Activated CD8-positive, alpha-beta T cell treated with anti-CD3 and anti-CD28 coated beads, Interleukin-2, amount 10 ng/mL, durations not matched to agents 7 days and 5 days (primary cell): ENCODE measurements at regions of chr3 and their contacts with region 1.

Region 1: DNA sequence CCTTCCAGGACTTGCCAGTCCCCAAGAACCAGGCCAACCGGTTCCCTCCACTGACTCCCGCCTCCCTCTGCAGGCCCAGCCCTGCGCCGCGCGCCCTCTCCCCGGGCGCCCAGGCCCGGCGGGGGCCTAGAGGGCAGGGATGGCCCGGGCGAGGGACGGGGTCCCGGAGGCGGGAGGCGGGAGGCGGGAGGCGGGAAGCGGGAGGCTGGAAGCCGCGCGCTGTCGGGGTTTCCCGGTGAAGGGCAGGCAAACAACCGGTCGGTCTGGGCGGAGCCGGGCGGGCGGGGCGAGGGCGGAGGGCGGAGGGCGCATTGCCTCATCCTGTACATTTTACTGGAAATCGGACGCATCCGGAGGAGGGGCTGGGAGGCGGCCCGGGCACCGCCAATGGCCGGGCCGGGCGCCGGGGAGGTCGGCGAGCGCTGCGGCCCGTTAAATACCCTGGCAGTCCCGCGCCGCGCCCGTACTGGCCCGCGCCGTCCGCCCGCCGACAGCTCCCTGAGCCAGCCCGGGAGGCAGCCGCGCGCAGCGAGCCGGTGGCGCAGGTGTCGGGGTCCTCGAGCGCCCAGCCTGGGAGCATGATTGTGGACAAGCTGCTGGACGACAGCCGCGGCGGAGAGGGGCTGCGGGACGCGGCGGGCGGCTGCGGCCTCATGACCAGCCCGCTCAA is at the start of gene NFKBIZ:
- DNase-seq: peak; percentile 94
- ATAC-seq: peak; percentile 84
- H3K4me3 Mint-ChIP-seq: peak within 1 kb of the TSS; percentile 95
- H3K27ac Mint-ChIP-seq: peak within 1 kb of the TSS; percentile 97
- H3K4me1 Mint-ChIP-seq: peaks cover 40% of the 10 kb centered on the region
- H3K27me3 Mint-ChIP-seq: no peaks in the 10 kb centered on the region
- total RNA-seq, gene NFKBIZ: 45.3 to 48.1 TPM

Region 2: DNA sequence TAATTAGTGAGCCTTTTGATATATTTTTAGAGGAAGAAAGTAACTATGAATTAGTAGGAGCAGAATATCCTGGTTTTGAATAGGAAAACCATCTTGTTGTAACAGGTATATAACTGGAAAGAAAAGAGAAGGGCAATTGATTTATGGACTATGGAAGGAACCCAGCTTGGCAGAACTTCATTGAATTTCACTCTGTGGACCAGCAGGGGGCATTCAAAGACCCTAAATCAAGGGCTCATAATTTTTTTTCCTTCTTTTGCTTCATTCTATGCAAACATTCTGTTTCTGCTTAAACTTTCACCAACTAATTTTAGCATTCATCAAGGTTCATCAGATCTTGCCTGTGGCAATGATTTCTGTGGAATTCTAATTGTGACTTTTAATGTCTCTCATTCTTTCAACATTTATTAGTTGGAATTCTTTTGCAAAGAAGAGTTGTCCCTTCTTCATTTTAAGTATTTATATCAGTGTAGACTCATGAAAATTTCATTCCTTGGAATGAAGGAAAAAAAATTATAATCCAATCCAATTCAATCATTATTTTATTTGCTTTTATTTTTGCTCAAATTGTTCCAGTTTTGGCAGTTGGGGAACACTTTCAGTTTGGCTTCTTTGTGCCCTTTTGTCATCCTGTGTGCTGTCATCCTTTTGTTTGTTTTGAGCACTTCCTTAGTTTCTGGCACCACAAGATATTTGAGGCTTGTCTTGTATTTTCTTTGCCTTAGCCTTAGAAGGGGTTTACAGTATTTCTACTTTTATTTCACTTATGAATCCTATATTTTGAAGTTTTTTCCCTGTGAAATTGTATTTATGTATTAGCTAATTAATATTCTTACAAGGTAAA is 39.8 kb before region 1 on chr3:
- CTCF ChIA-PET with region 1: interaction called, 29 read pairs
- POLR2A ChIA-PET with region 1: interaction called, 23 read pairs
- DNase-seq: peak; percentile 60
- ATAC-seq: peak; percentile 74
- H3K4me3 Mint-ChIP-seq: peak overlapping the region; percentile 16
- H3K27ac Mint-ChIP-seq: peak overlapping the region; percentile 50
- H3K4me1 Mint-ChIP-seq: peaks cover 52% of the 10 kb centered on the region
- H3K27me3 Mint-ChIP-seq: no peaks in the 10 kb centered on the region

Region 3: GRCh38 chr3:101821503-101821902 is 27.7 kb before region 1 on chr3:
- CTCF ChIA-PET with region 1: interaction called, 15 read pairs
- POLR2A ChIA-PET with region 1: interaction called, 298 read pairs
- DNase-seq: no peak
- ATAC-seq: no peak
- H3K4me3 Mint-ChIP-seq: no peak overlapping the region
- H3K27ac Mint-ChIP-seq: no peak overlapping the region
- H3K4me1 Mint-ChIP-seq: peaks cover 13% of the 10 kb centered on the region
- H3K27me3 Mint-ChIP-seq: no peaks in the 10 kb centered on the region

Region 4: GRCh38 chr3:101861212-101861788 is 12.1 kb after region 1 on chr3:
- CTCF ChIA-PET with region 1: no interaction called
- POLR2A ChIA-PET with region 1: interaction called, 10 read pairs
- DNase-seq: no peak
- ATAC-seq: no peak
- H3K4me3 Mint-ChIP-seq: no peak overlapping the region
- H3K27ac Mint-ChIP-seq: peak overlapping the region; percentile 5
- H3K4me1 Mint-ChIP-seq: peaks cover 20% of the 10 kb centered on the region
- H3K27me3 Mint-ChIP-seq: no peaks in the 10 kb centered on the region

Region 5: DNA sequence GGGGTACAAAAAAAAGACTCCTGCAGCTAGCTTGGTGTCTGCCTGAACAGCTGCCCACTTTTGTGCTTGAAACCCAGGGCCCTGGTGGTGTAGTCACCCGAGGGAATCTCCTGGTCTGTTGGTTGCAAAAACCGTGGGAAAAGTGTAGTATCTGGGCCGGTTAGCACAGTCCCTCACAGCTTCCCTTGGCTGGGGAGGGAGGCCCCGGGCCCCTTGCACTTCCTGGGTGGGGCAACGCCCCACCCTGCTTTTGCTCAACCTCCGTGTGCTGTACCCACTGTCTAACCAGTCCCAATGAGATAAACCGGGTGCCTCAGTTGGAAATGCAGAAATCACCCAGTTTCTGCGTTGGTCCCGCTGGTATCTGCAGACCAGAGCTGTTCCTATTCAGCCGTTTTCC is 373.9 kb after region 1 on chr3:
- CTCF ChIA-PET with region 1: interaction called, 26 read pairs
- POLR2A ChIA-PET with region 1: interaction called, 12 read pairs
- DNase-seq: no peak
- ATAC-seq: no peak
- H3K4me3 Mint-ChIP-seq: no peak overlapping the region
- H3K27ac Mint-ChIP-seq: peak overlapping the region; percentile 56
- H3K4me1 Mint-ChIP-seq: peaks cover 34% of the 10 kb centered on the region
- H3K27me3 Mint-ChIP-seq: peaks cover 12% of the 10 kb centered on the region